ENCODE measurements at regions of chr16 and their contacts with region 1.

Region 1: GRCh38 chr16:31202414-31203375 is at the start of gene PYCARD:
- DNase-seq: no peak
- H3K4me3 Mint-ChIP-seq: peak within 1 kb of the TSS; percentile 85
- H3K27ac Mint-ChIP-seq: peak within 1 kb of the TSS; percentile 80
- H3K4me1 Mint-ChIP-seq: peaks cover 55% of the 10 kb centered on the region
- H3K27me3 Mint-ChIP-seq: peaks cover 5% of the 10 kb centered on the region
- total RNA-seq, gene PYCARD: 20.9 and 21.2 TPM in 2 replicates

Region 2: DNA sequence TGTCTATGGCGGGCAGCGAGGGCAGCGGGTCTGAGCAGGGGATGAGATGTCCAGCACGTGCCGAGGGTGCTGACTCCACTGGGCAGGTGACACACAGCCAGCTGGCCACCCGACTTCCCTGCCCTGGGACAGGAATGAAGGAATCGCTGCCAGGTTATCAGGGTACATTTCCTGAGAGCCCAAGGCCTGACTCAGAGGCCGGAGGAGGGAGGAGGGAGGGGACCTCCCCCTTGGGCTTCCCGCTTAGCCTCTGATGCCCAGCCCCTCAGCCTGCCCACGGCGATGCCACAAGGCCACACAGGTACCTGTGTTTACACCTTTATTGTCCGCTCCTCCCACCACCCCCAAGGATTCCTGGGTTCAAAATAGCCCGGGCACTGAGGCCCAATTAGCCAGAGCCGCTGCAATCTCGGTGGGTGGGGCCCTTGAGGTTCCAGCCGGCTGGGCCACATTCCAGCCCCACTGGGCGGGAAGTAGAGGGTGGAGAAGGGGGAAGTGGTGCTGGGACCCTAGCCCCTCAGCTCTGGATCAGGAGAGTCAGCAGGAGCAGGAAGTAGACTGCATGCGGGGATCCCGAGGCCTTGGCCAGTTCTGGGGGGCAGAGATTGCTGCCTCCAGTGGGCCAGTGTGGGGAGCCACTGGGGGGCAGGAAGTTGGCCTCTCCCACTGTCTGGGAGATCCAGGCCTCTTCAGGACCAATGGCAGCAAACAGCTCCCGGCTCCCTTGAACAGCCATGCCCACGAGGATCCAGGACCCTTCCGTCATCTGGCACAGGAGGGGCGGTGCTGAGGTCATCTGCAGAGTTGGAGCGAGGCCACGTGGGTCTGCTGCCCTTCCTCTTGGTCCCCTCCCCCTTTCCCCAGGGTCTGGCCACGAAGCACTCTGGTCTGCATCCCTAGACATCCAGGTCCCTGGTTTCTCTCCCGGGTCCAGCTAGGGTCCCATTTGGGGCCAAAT is 63.8 kb before region 1 on chr16:
- intact Hi-C with region 1: no loop called
- DNase-seq: no peak
- H3K4me3 Mint-ChIP-seq: no peak overlapping the region
- H3K27ac Mint-ChIP-seq: no peak overlapping the region
- H3K4me1 Mint-ChIP-seq: peaks cover 11% of the 10 kb centered on the region
- H3K27me3 Mint-ChIP-seq: peaks cover 2% of the 10 kb centered on the region

Region 3: DNA sequence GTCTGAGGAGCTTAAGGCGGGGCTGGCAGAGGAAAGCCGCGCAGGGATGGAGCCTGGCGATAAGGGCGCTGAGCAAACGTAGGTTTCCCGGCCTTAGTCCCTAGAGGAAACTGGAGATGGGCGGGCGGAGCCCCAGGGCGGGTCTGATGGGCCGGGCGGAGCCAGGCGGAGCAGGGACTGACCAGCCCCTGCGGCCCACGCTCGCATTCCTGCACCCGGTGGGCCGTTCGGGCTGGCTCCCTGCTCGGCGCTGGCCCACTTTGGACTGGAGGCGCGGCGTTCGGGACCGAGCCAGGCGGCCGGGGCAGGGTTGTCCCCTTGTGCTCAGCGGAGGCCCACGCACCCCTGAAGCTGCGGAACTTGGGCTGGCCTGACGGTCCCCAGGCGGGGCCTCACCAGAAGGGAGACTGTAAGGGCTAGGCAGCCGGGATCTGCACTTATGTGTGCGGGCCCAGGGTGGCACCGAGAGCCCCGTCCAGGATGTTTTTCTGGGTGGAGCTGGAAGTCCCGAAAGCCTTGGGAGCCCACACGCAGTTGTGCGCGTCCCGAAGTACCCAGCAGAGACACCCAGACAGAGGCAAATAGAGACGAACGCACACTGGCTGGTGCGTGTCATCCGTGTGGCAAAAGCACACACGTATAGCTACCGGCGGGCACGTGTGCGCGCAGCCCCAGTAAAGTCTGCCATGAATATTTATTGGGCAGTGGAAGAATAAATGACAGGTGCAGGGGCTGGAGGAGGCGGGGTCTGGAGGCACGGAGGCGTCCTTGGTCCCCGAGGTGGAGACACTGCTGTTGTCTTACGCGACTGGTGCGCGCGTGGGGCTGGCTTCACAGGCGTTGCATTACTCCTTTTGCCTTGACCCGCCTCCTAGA is 12.8 kb after region 1 on chr16:
- intact Hi-C with region 1: loop called (anchors 2 kb)
- DNase-seq: no peak
- H3K4me3 Mint-ChIP-seq: peak overlapping the region; percentile 74
- H3K27ac Mint-ChIP-seq: no peak overlapping the region
- H3K4me1 Mint-ChIP-seq: peaks cover 23% of the 10 kb centered on the region
- H3K27me3 Mint-ChIP-seq: peaks cover 31% of the 10 kb centered on the region

Region 4: DNA sequence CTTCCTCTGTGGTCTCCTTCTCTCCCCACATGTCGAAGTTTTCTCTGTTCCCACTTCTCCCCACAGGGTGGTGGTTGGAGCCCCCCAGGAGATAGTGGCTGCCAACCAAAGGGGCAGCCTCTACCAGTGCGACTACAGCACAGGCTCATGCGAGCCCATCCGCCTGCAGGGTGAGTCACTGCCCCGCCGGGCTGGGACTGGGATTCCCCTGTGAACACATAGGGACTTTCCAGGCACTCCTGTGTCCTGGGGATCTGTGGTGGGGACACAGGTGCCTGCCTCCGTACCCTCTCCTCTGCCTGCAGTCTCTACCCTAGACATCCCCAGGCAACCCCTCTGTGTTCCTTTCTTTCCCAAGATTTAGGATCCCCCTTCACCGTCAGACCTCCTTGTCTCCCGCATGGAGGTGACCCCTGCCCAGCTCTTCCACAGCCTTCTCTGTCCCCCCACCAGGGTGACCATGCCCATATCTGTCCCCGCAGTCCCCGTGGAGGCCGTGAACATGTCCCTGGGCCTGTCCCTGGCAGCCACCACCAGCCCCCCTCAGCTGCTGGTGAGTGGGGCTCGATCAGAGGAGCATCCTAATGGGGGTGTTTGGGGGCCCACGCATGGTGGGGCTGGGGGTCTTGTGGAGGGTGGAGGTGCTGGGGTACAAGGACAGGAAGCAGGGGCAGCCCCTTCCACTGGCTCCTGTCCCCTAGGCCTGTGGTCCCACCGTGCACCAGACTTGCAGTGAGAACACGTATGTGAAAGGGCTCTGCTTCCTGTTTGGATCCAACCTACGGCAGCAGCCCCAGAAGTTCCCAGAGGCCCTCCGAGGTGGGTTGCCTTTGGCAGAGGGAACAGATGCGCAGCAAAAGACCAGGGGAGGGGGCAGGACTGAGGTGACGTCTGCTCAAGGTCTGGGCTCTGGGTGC is 62.9 kb after region 1 on chr16:
- intact Hi-C with region 1: loop called (anchors 2 kb)
- DNase-seq: peak; percentile 78
- H3K4me3 Mint-ChIP-seq: peak overlapping the region; percentile 80
- H3K27ac Mint-ChIP-seq: peak overlapping the region; percentile 95
- H3K4me1 Mint-ChIP-seq: peaks cover 71% of the 10 kb centered on the region
- H3K27me3 Mint-ChIP-seq: no peaks in the 10 kb centered on the region

Region 5: DNA sequence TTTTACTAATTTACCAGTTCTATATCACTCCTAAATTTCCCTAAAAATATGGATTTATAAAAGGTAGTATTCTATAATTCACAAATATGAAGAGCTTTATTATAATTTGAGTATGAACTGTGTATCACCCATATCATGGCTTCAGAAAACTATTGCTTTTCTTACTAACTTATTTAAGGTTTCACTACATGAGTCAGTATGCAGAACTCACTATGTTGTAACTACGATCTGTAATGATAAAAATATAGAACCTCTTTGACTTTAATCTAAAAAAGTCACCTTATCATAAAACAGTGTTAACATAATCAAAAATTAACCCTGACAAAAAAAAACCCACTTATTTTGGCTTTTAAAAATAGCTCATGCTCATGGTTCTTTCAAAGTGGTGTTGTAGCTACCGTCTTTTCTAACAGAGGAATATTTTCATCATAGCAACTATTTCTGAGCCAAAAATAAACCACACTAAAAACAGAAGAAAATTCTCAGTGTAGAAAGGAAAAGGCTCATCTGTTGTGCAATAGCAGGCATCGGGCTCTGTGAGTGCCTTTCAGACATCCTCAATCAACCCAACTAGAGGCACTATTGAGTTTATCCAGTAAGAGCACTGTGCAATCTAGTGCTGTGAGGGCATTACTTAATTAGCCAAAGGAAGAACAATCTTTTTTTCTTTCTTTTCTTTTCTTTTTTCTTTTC is 99.2 kb after region 1 on chr16:
- intact Hi-C with region 1: loop called (anchors 1 kb)
- DNase-seq: no peak
- H3K4me3 Mint-ChIP-seq: no peak overlapping the region
- H3K27ac Mint-ChIP-seq: no peak overlapping the region
- H3K4me1 Mint-ChIP-seq: peaks cover 14% of the 10 kb centered on the region
- H3K27me3 Mint-ChIP-seq: peaks cover 20% of the 10 kb centered on the region

Region 6: DNA sequence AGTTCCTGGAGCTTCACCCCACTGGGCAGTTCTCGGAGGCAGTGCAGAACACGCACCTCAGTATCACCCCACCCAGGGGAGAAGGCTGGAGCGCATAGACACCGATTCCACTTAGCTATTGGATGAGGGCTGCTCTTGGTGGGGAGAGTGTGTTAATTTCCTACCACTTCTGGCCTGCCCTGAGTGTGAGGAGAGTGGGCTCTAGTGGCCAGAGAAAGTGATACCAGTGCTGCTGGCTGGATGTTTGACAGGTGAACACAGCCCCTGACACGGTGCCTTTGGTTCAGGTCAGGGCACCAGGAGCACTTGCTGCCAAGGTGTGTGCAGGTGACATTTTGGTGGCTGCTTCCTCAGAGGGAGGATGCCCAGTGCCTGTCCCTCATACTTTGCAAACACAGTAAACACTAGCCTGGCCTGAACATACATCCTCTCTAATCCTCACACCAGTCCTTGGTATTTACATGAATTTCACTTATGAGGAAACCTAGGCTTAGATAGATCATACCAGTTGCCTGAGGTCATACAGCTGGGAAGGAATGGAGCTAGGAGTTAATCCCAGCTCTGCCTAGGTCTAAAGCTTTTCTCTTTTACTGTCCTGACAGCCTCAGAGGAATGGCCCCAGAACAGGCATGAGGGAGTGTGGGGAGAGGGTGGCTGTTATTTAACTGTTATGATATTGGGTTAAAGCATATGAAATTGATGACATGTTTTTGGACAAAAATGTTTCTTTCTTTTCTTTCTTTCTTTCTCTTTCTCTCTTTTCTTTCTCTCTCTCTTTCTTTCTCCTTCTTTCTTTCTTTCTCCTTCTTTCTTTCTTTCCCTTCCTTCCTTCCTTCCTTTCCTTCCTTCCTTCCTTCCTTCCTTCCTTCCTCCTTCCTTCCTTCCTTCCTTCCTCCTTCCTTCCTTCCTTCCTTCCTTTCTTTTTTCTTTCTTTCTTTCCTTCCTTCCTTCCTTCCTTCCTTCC is 131.3 kb after region 1 on chr16:
- intact Hi-C with region 1: loop called (anchors 2 kb)
- DNase-seq: no peak
- H3K4me3 Mint-ChIP-seq: no peak overlapping the region
- H3K27ac Mint-ChIP-seq: peak overlapping the region; percentile 40
- H3K4me1 Mint-ChIP-seq: peaks cover 45% of the 10 kb centered on the region
- H3K27me3 Mint-ChIP-seq: peaks cover 3% of the 10 kb centered on the region